GM23248 (cell line): ENCODE measurements at regions of chr16 and their contacts with region 1.

Region 1: DNA sequence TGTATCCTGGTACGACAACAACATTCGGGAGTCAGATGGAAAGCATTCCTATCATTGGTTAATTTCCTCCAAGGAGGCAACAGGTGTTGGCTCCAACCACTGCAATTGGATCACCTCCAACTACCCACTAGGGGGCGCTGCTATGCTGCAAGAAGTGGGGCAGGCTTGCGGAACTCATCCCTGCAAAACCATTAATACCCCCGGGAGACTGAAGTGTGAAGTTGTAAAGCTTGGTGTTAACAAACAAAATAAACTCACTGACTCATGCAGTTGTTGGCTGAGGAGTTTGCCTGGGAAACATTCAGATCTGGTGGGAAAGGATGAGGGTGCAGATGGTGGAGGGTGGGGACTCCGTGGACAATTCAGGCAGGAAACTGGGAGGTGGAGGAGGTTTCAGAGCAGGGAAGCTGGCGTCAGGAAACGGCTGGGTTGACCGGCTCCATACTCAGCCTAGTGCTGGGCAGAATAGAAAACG is 84.9 kb downstream of the HS3ST2 start:
- DNase-seq: peak; percentile 51
- H3K4me3 ChIP-seq: no peak overlapping the region
- H3K27ac ChIP-seq: no peak overlapping the region
- H3K4me1 ChIP-seq: no peaks in the 10 kb centered on the region
- H3K27me3 ChIP-seq: no peaks in the 10 kb centered on the region

Region 2: GRCh38 chr16:22848451-22848850 is 50.5 kb before region 1 on chr16:
- in situ Hi-C with region 1: no loop called
- DNase-seq: no peak
- H3K4me3 ChIP-seq: no peak overlapping the region
- H3K27ac ChIP-seq: no peak overlapping the region
- H3K4me1 ChIP-seq: no peaks in the 10 kb centered on the region
- H3K27me3 ChIP-seq: no peaks in the 10 kb centered on the region

Region 3: DNA sequence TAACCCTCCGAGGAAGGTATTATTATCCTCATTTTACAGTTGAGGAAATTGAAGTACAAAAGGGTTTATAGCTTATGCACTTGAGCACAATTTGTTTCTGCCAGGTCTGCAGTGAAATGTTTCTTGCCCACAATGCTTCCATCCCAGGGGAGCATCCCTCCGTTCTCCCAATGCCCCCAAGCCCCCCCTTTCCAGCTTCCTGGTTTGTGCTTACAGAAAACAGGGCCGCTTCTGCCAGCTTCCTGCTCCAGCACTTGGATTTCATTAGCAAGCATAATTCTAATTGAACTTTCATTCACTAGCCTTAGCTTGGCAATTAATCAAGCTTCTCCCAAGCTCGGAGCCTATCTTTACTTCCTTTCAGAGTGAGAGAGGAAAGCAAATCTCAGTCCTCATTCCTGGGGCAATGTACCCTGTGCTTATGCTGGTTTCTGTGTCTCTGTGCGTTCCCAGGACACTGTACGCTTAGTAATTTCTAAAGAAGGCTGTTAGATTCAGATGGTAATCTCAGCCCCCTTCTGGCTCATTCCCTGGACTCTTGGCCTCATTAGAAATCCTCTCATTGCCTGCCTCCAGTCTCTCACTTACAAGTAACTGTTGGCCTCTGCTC is 56.7 kb after region 1 on chr16:
- in situ Hi-C with region 1: loop called (anchors 10 kb)
- DNase-seq: no peak
- H3K4me3 ChIP-seq: no peak overlapping the region
- H3K27ac ChIP-seq: no peak overlapping the region
- H3K4me1 ChIP-seq: no peaks in the 10 kb centered on the region
- H3K27me3 ChIP-seq: no peaks in the 10 kb centered on the region